PC-3 (cell line): ENCODE measurements at regions of chr10 and their contacts with region 1.

Region 1: GRCh38 chr10:114779803-114780609 is 41.6 kb upstream of the FHIP2A start:
- DNase-seq: peak; percentile 91
- ATAC-seq: peak; percentile 94
- H3K4me3 ChIP-seq: no peak overlapping the region
- H3K27ac ChIP-seq: peak overlapping the region; percentile 49
- H3K4me1 ChIP-seq: peaks cover 24% of the 10 kb centered on the region
- H3K27me3 ChIP-seq: no peaks in the 10 kb centered on the region
- CTCF ChIP-seq: no peak

Region 2: DNA sequence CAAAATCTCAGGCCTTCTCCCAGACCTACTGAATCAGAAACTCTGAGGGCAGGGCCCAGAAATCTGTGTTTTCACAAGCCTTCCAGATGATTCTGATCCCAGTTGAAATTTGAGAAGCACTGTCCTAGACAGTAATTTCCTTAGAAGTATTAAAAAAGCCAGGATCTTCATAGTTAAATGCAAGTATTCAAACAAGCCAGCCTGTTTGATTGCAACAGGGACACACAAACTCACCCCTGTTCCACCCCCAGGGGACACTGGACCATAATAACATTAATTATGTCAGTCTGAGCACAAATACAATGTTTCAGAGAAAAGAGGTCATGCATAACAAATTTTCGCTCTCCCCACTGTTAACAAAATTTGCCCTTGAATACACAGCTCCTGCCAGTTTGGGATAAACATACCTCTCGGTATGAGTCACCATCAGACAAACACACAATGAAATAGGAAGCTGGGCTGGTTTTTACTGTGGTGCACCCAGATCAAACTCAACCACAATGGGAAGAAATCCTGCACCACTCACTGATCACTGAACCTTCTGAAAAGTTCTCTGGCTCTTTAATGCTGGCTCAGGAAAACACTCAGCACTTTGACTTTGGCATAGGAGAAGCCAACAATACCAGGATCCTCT is 156.2 kb before region 1 on chr10:
- CTCF ChIA-PET with region 1: no interaction called
- POLR2A ChIA-PET with region 1: no interaction called
- intact Hi-C with region 1: loop called (anchors 5 kb)
- DNase-seq: peak; percentile 89
- ATAC-seq: peak; percentile 94
- H3K4me3 ChIP-seq: no peak overlapping the region
- H3K27ac ChIP-seq: peak overlapping the region; percentile 66
- H3K4me1 ChIP-seq: peaks cover 45% of the 10 kb centered on the region
- H3K27me3 ChIP-seq: no peaks in the 10 kb centered on the region
- CTCF ChIP-seq: no peak

Region 3: GRCh38 chr10:114708717-114709335 is 71.2 kb before region 1 on chr10:
- CTCF ChIA-PET with region 1: no interaction called
- POLR2A ChIA-PET with region 1: interaction called, 4 read pairs
- intact Hi-C with region 1: loop called (anchors 1 kb)
- DNase-seq: peak; percentile 85
- ATAC-seq: peak; percentile 93
- H3K4me3 ChIP-seq: no peak overlapping the region
- H3K27ac ChIP-seq: peak overlapping the region; percentile 28
- H3K4me1 ChIP-seq: peaks cover 22% of the 10 kb centered on the region
- H3K27me3 ChIP-seq: no peaks in the 10 kb centered on the region
- CTCF ChIP-seq: no peak

Region 4: GRCh38 chr10:114754445-114755320 is 25.3 kb before region 1 on chr10:
- CTCF ChIA-PET with region 1: no interaction called
- POLR2A ChIA-PET with region 1: no interaction called
- intact Hi-C with region 1: loop called (anchors 1 kb)
- DNase-seq: peak; percentile 77
- ATAC-seq: peak; percentile 71
- H3K4me3 ChIP-seq: peak overlapping the region; percentile 30; the same call in 1 of the 2 replicates
- H3K27ac ChIP-seq: peak overlapping the region; percentile 72
- H3K4me1 ChIP-seq: peaks cover 38% of the 10 kb centered on the region
- H3K27me3 ChIP-seq: no peaks in the 10 kb centered on the region
- CTCF ChIP-seq: no peak

Region 5: GRCh38 chr10:115456822-115457221 is 676.8 kb after region 1 on chr10:
- CTCF ChIA-PET with region 1: no interaction called
- POLR2A ChIA-PET with region 1: no interaction called
- intact Hi-C with region 1: no loop called
- DNase-seq: no peak
- ATAC-seq: no peak
- H3K4me3 ChIP-seq: no peak overlapping the region
- H3K27ac ChIP-seq: no peak overlapping the region
- H3K4me1 ChIP-seq: no peaks in the 10 kb centered on the region
- H3K27me3 ChIP-seq: no peaks in the 10 kb centered on the region
- CTCF ChIP-seq: no peak